H1 (cell line): ENCODE measurements at regions of chr2 and their contacts with region 1.

Region 1: DNA sequence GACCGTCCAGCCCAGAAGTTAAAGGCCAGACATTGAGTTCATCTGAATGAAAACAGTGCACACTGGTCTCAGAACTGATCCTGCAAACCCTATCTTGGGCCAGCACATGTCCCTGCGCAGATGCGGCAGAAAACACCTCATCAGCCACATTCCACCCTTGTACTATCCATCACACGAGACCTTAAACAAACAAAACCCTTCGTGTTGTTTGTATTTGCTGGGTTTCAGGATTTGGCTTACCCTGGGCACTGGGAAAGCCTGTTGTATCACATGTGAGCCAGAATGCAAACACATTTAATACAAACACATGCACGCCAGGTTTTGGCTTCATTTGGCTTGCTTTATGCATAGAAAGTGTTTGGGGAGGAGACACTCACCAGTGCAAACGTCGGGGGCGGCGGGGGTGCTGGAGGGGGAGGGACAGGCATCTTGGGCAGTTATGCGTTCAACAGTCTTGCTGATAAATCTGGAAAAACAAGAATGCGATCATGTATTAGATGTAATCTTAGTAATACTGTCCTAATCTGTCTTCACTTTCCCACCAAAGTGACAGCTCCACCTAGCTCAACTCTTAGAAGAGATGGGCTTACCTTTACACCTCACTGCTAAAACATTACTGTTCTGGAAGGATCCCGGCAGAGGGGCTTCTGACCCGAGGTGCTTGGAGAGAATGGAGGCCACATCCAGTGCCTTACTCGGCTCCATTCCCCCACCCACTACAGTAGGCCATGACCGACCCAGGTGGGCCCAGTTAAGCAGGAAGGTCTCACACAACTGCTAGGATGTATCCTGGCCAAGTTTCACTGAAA is 12.3 kb downstream of the WIPF1 start:
- DNase-seq: no peak
- H3K4me3 ChIP-seq: no peak overlapping the region
- H3K27ac ChIP-seq: no peak overlapping the region
- H3K4me1 ChIP-seq: peaks cover 2 to 15% (median 9%) of the 10 kb centered on the region in 4 experiments; a peak in 5 of 7 replicates
- H3K27me3 ChIP-seq: no peaks in the 10 kb centered on the region
- CTCF ChIP-seq: no peak
- EP300 ChIP-seq: no peak
- POLR2A ChIP-seq: no peak
- RAD21 ChIP-seq: no peak

Region 2: DNA sequence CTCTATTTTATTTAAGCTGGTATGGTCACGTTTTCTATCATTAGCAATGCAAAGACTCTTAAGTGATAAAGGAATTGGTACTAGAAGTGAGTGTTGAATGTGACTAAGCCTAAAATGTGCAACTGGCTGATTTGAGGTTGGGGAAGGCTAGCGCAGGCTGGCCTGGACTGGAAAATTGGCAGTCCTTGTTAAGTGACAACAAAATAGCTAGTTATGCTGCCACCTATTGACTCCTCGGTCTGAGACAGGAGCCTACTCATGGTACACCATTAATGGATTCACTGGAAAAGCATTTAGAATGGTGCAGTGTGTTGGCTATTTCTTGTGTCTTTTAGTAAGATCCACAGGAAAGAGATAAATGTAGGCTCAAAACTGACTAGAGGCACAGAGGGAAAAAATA is 17.9 kb after region 1 on chr2:
- CTCF ChIA-PET with region 1: interaction called, 14 read pairs
- POLR2A ChIA-PET with region 1: no interaction called
- DNase-seq: no peak
- H3K4me3 ChIP-seq: no peak overlapping the region
- H3K27ac ChIP-seq: no peak overlapping the region
- H3K4me1 ChIP-seq: no peaks in the 10 kb centered on the region
- H3K27me3 ChIP-seq: no peaks in the 10 kb centered on the region
- CTCF ChIP-seq: peak in 2 of 3 experiments; percentile 52 to 67; a peak in 3 of 4 replicates
- EP300 ChIP-seq: no peak
- POLR2A ChIP-seq: no peak
- RAD21 ChIP-seq: peak; percentile 49 to 67; a peak in 3 of 4 replicates